Dendritic cell treated with granulocyte-macrophage colony-stimulating factor and Interleukin-4, amounts not matched to agents 40 ng/mL and 50 ng/mL, for 4 days (primary cell): ENCODE measurements at regions of chr1 and their contacts with region 1.

Region 1: GRCh38 chr1:78045926-78046778 is at the start of gene GIPC2:
- H3K4me3 Mint-ChIP-seq: peak within 1 kb of the TSS; percentile 71
- H3K27ac Mint-ChIP-seq: no peak within 1 kb of the TSS
- H3K4me1 Mint-ChIP-seq: peaks cover 20% of the 10 kb centered on the region
- H3K27me3 Mint-ChIP-seq: peaks cover 58% of the 10 kb centered on the region

Region 2: DNA sequence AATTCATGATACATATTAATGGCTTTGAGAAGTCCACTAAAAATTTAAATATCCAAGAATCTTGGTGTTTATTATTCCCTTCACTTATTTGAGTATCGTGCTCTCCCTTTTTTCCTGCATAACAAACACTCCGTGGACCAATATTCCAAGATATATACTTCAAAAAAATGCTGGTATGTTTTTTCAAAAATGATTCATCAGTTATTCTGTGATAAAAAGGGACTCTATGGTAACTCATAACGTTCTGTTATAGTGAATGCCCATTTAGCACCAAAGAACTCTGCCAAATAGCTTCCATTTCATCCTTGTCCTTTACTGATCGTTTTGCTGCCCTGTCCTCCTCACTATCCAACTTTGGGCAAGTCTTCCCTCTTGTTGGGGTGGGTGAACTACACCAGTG is 12.5 kb after region 1 on chr1:
- intact Hi-C with region 1: loop called (anchors 2 kb)
- H3K4me3 Mint-ChIP-seq: no peak overlapping the region
- H3K27ac Mint-ChIP-seq: no peak overlapping the region
- H3K4me1 Mint-ChIP-seq: no peaks in the 10 kb centered on the region
- H3K27me3 Mint-ChIP-seq: no peaks in the 10 kb centered on the region